IMR-90 (cell line): ENCODE measurements at regions of chr15 and their contacts with region 1.

Region 1: DNA sequence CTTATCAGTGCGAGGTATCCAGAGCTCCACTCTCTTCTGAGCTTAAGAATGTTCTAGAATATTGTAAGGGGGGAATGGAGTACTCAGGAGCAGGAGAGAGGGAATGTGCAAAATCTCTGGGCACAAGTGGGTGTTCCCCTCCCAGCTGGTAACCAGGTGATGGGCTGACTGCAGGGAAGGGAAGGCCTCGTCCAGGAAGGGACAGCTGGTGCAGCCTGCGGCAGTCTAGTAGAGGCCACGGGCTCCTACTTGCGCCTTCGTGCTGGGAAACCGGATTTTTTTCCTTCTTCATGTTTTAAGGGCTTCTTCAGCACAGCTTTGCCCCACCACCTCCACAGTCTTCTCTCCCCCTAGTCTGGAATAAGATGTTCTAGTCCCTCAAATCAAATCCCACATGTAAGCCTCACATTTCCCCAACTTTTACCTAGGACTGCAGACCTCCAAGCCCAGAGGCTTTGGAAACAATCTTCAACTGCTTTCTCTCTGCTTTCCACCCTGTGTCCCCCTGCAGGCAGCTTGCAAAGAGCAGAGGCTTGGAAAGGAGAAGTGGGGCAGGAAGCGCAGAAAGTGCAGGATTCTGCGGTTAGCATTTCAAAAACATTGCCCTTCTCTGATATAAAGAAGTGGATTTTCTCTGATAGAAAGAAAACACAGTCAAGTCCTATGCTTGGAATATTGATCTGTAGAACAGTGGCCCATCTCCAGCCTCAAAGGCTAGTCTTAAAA is 11.9 kb upstream of the CGNL1 start:
- DNase-seq: peak; percentile 17
- ATAC-seq: peak; percentile 62; the same call in 1 of the 2 replicates
- H3K4me3 ChIP-seq: no peak overlapping the region
- H3K27ac ChIP-seq: no peak overlapping the region
- H3K4me1 ChIP-seq: no peaks in the 10 kb centered on the region
- H3K27me3 ChIP-seq: no peaks in the 10 kb centered on the region; the same call in 1 of the 2 replicates
- CTCF ChIP-seq: peak; percentile 17; the same call in 1 of the 2 replicates
- POLR2A ChIP-seq: no peak
- RAD21 ChIP-seq: no peak

Region 2: DNA sequence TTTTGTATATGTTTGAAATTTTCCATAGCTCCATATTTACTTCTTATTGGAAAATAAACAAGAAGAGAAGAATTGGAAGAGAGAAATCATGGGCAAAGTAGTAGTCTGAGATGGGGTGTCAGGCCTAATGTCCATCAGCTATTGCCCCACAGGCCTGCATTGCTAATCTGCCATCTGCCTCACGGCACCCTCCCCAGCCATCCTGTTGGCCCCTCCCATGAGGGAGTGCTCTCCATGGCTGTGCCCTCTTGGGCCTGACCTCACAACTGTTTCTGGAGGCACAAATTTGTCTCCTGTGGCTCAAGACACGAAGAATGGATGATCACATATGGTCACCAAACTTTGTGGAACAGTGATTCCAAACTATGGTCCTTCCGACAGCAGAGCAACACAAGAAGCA is 15.7 kb before region 1 on chr15:
- CTCF ChIA-PET with region 1: no interaction called
- POLR2A ChIA-PET with region 1: no interaction called
- dilution Hi-C with region 1: no loop called
- in situ Hi-C with region 1: no loop called
- intact Hi-C with region 1: no loop called
- DNase-seq: no peak
- ATAC-seq: no peak
- H3K4me3 ChIP-seq: no peak overlapping the region
- H3K27ac ChIP-seq: no peak overlapping the region
- H3K4me1 ChIP-seq: no peaks in the 10 kb centered on the region
- H3K27me3 ChIP-seq: peaks cover 7% of the 10 kb centered on the region; the same call in 1 of the 2 replicates
- CTCF ChIP-seq: no peak
- POLR2A ChIP-seq: no peak
- RAD21 ChIP-seq: no peak

Region 3: GRCh38 chr15:57406062-57406772 is 41.8 kb after region 1 on chr15:
- CTCF ChIA-PET with region 1: interaction called, 10 read pairs
- POLR2A ChIA-PET with region 1: no interaction called
- dilution Hi-C with region 1: no loop called
- in situ Hi-C with region 1: no loop called
- intact Hi-C with region 1: no loop called
- DNase-seq: peak; percentile 19
- ATAC-seq: no peak; the same call in 1 of the 2 replicates
- H3K4me3 ChIP-seq: no peak overlapping the region
- H3K27ac ChIP-seq: no peak overlapping the region
- H3K4me1 ChIP-seq: no peaks in the 10 kb centered on the region
- H3K27me3 ChIP-seq: peaks cover 18% of the 10 kb centered on the region
- CTCF ChIP-seq: no peak
- POLR2A ChIP-seq: no peak
- RAD21 ChIP-seq: no peak

Region 4: GRCh38 chr15:57495041-57495440 is 130.6 kb after region 1 on chr15:
- CTCF ChIA-PET with region 1: interaction called, 7 read pairs
- POLR2A ChIA-PET with region 1: interaction called, 12 read pairs
- dilution Hi-C with region 1: no loop called
- in situ Hi-C with region 1: no loop called
- intact Hi-C with region 1: no loop called
- DNase-seq: no peak
- ATAC-seq: no peak
- H3K4me3 ChIP-seq: no peak overlapping the region
- H3K27ac ChIP-seq: no peak overlapping the region
- H3K4me1 ChIP-seq: no peaks in the 10 kb centered on the region
- H3K27me3 ChIP-seq: no peaks in the 10 kb centered on the region
- CTCF ChIP-seq: no peak
- POLR2A ChIP-seq: no peak
- RAD21 ChIP-seq: no peak

Region 5: DNA sequence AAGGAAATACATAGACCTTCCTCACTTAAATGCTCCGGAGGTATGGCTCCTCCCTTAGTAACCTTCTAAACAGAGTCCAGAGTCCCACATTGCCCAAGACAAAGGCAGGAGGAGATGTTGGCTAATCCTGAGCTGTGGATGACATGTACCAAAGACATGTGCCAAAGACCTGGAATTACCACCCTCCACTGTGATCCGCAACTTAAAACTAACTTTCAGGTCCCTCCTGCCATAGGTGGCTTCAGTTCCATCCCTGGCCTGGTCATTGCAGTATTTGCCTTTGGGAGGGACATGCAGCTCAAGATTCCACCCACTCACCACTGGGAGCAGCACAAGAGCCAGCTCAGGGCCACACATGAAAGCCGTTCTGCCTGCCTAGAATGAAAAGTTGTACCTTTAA is 255.3 kb after region 1 on chr15:
- CTCF ChIA-PET with region 1: no interaction called
- POLR2A ChIA-PET with region 1: no interaction called
- dilution Hi-C with region 1: no loop called
- in situ Hi-C with region 1: no loop called
- intact Hi-C with region 1: no loop called
- DNase-seq: no peak
- ATAC-seq: no peak
- H3K4me3 ChIP-seq: no peak overlapping the region
- H3K27ac ChIP-seq: no peak overlapping the region
- H3K4me1 ChIP-seq: no peaks in the 10 kb centered on the region
- H3K27me3 ChIP-seq: peaks cover 5% of the 10 kb centered on the region
- CTCF ChIP-seq: no peak
- POLR2A ChIP-seq: no peak
- RAD21 ChIP-seq: no peak